Heart left ventricle (tissue), 16 donors: ENCODE measurements at regions of chr16 and their contacts with region 1.

Region 1: DNA sequence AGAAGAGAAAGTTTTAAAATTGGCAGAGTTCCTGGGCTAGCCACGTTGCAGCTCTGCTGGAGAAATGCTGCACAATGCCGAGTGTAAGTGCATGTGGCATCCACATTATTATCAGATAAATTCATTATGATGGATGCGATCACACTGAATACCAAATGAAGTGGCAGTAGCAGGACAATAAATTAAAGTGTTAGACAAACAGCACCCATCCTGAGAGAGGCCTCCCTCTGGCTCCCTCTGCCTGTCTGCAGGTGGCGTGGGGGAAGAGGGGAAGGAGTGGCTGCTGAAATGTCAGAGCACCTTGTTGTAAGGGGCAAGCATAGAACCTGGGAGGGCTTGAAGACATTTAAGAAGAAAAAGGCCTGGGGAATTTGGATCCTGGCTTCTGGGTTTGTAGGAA is 324.1 kb downstream of the HAPSTR1 start:
- DNase-seq: no peak
- ATAC-seq: no peak
- H3K4me3 ChIP-seq: no peak overlapping the region
- H3K27ac ChIP-seq: no peak overlapping the region
- H3K4me1 ChIP-seq: no peaks in the 10 kb centered on the region
- H3K27me3 ChIP-seq: no peaks in the 10 kb centered on the region
- CTCF ChIP-seq: no peak
- POLR2A ChIP-seq: no peak

Region 2: GRCh38 chr16:9378876-9379275 is 36.7 kb before region 1 on chr16:
- intact Hi-C with region 1: loop called in 3 of 10 experiments (anchors 5 kb)
- DNase-seq: peak in 2 of 5 donors; percentile 33
- ATAC-seq: peak; percentile 47 to 84 (median 48)
- H3K4me3 ChIP-seq: no peak overlapping the region
- H3K27ac ChIP-seq: peak overlapping the region in 2 of 12 donors; percentile 11 to 52
- H3K4me1 ChIP-seq: peaks cover 0 to 22% (median 0%) of the 10 kb centered on the region in 12 donors
- H3K27me3 ChIP-seq: no peaks in the 10 kb centered on the region
- CTCF ChIP-seq: no peak
- POLR2A ChIP-seq: no peak

Region 3: GRCh38 chr16:9706217-9706836 is 290.8 kb after region 1 on chr16:
- intact Hi-C with region 1: no loop called
- DNase-seq: no peak
- ATAC-seq: no peak
- H3K4me3 ChIP-seq: no peak overlapping the region
- H3K27ac ChIP-seq: no peak overlapping the region
- H3K4me1 ChIP-seq: no peaks in the 10 kb centered on the region
- H3K27me3 ChIP-seq: peaks cover 0 to 6% (median 0%) of the 10 kb centered on the region in 9 donors
- CTCF ChIP-seq: no peak
- POLR2A ChIP-seq: no peak